ENCODE measurements at regions of chr13 and their contacts with region 1.

Region 1: DNA sequence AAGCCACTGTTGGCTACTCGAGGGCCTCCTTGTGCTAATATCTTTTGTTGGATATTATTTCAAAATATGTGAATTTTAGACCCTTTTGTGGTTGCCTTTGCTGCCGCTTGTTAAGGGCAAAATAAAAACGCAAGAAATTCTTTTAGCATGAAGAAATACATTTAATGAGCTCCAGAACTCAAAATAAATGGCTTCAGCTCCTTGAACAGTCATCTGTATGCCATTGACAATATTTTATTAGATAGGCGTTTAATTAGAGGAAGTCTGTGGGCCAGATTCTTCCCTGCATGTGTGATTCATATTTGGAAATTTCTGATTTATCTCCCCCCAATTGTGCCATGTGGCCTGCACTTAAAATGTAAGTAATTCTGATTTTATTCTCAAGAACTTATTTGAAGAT is 177.2 kb downstream of the STK24 start:
- DNase-seq: peak; percentile 59
- H3K4me3 ChIP-seq: no peak overlapping the region
- CTCF ChIP-seq: no peak

Region 2: DNA sequence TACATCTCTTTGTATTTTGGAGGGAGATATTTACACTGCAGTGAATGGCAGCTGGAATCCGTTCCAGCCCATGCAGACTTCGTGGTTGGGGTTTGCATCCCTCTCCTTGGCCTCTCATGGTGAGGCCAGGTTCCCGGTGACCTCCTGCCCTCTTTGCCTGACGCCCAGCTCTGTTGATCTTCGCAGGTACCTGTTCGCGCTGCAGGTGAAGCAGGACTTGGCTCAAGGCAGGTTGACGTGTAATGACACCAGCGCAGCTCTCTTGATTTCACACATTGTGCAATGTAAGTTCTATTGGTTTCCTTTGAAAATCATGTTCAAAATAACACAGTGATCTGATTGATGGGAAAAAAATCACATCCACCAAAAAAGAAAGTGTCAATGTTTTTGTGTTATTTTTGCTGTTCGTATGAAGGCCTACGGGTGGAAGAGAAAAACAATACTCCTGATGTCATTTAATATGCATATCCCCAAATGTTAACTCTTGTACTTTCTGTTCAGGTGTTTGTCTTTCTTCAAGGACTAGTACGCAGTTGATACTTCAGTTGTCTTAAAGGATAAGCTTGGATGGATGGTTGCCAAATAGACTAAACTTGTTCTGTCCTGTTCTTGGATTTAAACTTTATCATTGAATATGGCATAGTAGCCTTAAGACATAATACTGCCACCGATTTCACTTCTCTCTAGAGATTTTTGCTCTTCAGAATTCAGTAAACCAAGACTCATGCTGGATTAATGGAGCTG is 21.9 kb before region 1 on chr13:
- CTCF ChIA-PET with region 1: no interaction called
- POLR2A ChIA-PET with region 1: no interaction called
- DNase-seq: no peak
- H3K4me3 ChIP-seq: no peak overlapping the region
- CTCF ChIP-seq: no peak

Region 3: DNA sequence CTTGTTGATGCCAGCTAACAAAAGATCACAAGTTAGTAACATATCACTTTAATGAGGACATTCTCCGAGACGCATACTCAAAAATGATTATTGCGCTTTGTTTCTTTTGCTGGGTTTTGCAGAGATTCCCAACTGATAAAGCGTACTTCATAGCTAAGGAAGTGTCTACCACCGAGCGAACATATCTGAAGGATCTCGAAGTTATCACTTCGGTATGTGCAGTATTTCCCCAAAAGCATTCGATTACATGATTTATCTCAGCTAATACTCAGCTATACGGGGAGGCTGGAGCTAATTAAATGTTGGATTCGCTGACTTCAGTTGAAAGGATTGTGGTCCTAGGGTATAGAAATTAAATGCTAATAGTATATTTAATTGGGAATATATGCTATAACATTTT is 10.9 kb after region 1 on chr13:
- CTCF ChIA-PET with region 1: interaction called, 5 read pairs
- POLR2A ChIA-PET with region 1: interaction called, 10 read pairs
- DNase-seq: peak; percentile 59
- H3K4me3 ChIP-seq: no peak overlapping the region
- CTCF ChIP-seq: no peak